ENCODE measurements at regions of chr3 and their contacts with region 1.

Region 1: GRCh38 chr3:140206196-140207048 is 271.4 kb downstream of the CLSTN2 start:
- DNase-seq: no peak

Region 2: DNA sequence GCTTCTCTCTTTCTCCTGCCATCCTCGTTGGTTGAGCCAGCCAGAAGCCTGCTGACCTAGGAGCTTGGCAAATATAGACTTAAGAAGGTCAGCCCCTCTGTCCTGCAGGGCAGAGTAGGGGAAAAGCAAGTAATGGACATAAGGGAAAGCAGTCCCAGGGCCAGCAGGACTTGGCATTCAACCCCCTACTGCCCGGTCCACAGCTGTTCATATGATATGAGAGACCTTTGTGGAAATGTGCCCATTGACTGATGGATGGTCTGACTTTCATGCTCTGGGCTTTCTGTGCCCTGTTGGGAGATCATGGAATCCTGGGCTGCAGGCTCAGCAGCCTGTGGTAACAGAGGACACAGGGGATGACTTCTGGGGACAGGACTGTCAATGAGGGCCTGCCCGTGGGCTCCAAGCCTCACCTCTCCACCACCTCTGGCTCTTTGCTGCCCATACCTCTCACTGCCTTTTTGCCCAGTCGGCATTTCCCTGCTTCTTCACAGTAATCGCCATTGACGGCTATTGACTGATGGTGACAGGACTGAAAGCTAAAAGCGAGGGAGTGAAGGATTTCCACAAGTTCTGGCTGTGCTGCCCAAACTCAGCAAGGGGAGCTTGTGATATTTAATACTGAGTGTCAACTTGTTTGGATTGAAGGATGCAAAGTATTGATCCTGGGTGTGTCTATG is 468.6 kb before region 1 on chr3:
- intact Hi-C with region 1: loop called in 1 of 2 experiments (anchors 5 kb)
- DNase-seq: no peak

Measured in posterior vena cava (tissue), 2 donors.